Lower leg skin (tissue), 4 donors: ENCODE measurements at regions of chr13 and their contacts with region 1.

Region 1: GRCh38 chr13:99908140-99908803 is 63.3 kb downstream of the ZIC5 start:
- DNase-seq: no peak
- H3K4me3 ChIP-seq: no peak overlapping the region
- CTCF ChIP-seq: no peak
- POLR2A ChIP-seq: no peak

Region 2: DNA sequence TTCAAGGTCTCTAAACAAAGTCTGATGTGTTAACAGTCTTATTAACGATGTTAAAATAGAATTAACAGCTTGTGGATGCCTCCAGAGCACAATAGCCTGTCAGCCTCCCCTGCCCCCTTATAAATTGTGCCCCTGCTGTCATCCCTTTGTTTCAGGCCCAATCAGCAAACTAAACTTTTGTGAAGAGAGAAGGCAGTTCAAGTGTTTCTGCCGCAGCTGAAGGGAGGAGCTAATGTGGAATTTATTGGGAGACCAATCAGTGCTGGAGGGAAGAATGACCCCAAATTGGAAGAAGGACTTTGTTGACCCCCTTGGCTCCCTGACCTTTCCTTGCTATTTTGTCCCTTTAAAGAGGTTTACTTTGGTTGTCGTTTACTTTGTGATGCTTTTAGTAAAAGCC is 246.5 kb before region 1 on chr13:
- intact Hi-C with region 1: loop called (anchors 10 kb)
- DNase-seq: no peak
- H3K4me3 ChIP-seq: no peak overlapping the region
- CTCF ChIP-seq: no peak
- POLR2A ChIP-seq: no peak

Region 3: DNA sequence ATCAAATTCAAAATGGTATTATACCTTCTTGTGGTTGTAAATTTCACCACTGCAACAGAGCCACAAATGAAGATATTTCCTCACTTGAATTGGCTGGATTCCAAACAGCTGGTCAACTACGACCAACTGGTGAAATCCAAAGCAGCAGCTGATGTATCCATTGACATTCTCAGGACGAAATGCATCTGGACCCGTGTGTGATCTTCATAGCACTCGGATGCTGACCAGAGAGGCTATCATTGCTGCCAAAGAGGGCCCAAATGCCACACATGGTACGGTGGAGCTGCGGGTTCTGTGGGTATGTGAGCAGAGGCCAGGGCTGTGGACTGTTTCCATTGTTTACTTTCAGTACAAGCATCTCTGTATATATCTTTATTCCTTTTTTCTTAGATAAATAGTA is 155.1 kb after region 1 on chr13:
- intact Hi-C with region 1: no loop called
- DNase-seq: no peak
- H3K4me3 ChIP-seq: no peak overlapping the region
- CTCF ChIP-seq: no peak
- POLR2A ChIP-seq: no peak